ENCODE measurements at regions of chr17 and their contacts with region 1.

Region 1: GRCh38 chr17:65638221-65638975 is 77.0 kb upstream of the AXIN2 start:
- DNase-seq: no peak
- ATAC-seq: no peak
- H3K4me3 ChIP-seq: no peak overlapping the region
- H3K27ac ChIP-seq: no peak overlapping the region
- H3K4me1 ChIP-seq: peaks cover 0 to 14% (median 0%) of the 10 kb centered on the region in 12 donors
- H3K27me3 ChIP-seq: no peaks in the 10 kb centered on the region
- CTCF ChIP-seq: no peak
- POLR2A ChIP-seq: no peak

Region 2: GRCh38 chr17:66177048-66177447 is 538.6 kb after region 1 on chr17:
- intact Hi-C with region 1: loop called in 1 of 10 experiments (anchors 10 kb)
- DNase-seq: no peak
- ATAC-seq: no peak
- H3K4me3 ChIP-seq: no peak overlapping the region
- H3K27ac ChIP-seq: no peak overlapping the region
- H3K4me1 ChIP-seq: peaks cover 0 to 5% (median 0%) of the 10 kb centered on the region in 12 donors
- H3K27me3 ChIP-seq: no peaks in the 10 kb centered on the region
- CTCF ChIP-seq: no peak
- POLR2A ChIP-seq: no peak